ENCODE measurements at regions of chr6 and their contacts with region 1.

Region 1: DNA sequence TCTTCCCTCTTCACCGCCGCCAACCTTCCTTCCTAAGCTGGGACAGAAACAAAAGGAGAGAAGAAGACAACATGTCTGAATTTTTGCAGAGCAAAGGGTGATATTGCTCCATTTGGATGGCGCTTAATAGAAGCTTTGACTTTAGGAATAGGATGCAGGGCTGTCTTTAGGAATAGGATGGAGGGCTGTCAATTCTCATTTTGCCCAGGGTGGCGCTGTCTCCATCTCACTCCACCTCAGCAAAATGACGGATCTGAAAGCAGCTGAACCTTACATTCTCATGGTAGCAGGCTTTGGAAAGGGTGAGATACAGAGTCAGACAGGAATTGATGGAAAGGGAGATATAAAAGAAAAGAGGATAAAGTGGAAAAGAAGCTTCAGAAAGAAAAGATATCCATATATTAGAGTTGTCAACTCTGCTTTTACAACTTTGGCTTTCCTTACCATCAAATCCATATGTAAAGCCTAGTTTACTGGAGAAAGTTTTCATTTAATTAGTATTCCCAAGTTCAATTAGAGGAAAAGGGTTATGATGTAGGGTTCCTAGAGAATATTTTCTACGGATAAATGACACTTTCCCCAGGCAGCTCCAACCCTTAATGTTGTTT is 2.4 kb downstream of the MTCL3 start:
- DNase-seq: no peak
- H3K4me3 ChIP-seq: peak overlapping the region; percentile 71
- CTCF ChIP-seq: peak; percentile 80

Region 2: GRCh38 chr6:127302728-127303660 is 213.8 kb before region 1 on chr6:
- CTCF ChIA-PET with region 1: interaction called, 84 read pairs
- POLR2A ChIA-PET with region 1: no interaction called
- DNase-seq: no peak
- H3K4me3 ChIP-seq: no peak overlapping the region
- CTCF ChIP-seq: peak; percentile 53

Region 3: GRCh38 chr6:127332383-127332961 is 184.3 kb before region 1 on chr6:
- CTCF ChIA-PET with region 1: interaction called, 14 read pairs
- POLR2A ChIA-PET with region 1: no interaction called
- DNase-seq: no peak
- H3K4me3 ChIP-seq: no peak overlapping the region
- CTCF ChIP-seq: no peak

Region 4: DNA sequence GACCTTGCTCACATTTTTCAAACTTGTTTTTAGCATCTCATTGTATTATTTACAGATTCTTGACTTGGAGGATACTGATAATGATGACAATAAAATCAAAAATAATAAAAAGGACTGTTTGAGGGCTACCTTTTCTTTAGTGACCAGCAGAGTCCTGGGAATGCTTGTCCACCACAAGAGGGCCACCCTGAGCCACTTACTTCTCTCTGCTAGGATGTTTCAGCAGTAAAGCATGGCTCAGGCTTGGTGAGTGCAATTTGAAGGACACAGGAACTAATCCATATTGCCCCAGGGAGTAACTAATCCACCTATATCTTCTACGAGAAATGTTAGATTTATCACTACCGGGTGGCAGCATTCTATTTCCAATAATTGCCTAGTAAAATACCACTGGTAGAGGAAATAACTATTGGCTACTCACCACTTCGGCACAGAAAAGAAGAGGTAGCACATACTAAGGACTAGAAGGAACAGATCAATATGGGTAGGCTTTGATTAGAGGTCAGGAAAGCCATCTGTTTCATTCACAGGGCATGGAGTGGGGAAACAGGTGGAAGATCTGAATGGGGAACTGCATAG is 51.8 kb before region 1 on chr6:
- CTCF ChIA-PET with region 1: interaction called, 32 read pairs
- POLR2A ChIA-PET with region 1: no interaction called
- DNase-seq: no peak
- H3K4me3 ChIP-seq: no peak overlapping the region
- CTCF ChIP-seq: peak; percentile 78

Region 5: GRCh38 chr6:127496471-127496870 is 20.3 kb before region 1 on chr6:
- CTCF ChIA-PET with region 1: interaction called, 97 read pairs
- POLR2A ChIA-PET with region 1: no interaction called
- DNase-seq: no peak
- H3K4me3 ChIP-seq: no peak overlapping the region
- CTCF ChIP-seq: no peak

Region 6: GRCh38 chr6:127533011-127533410 is 16.2 kb after region 1 on chr6:
- CTCF ChIA-PET with region 1: interaction called, 58 read pairs
- POLR2A ChIA-PET with region 1: no interaction called
- DNase-seq: no peak
- H3K4me3 ChIP-seq: no peak overlapping the region
- CTCF ChIP-seq: no peak

Region 7: GRCh38 chr6:127547215-127547614 is 30.4 kb after region 1 on chr6:
- CTCF ChIA-PET with region 1: interaction called, 38 read pairs
- POLR2A ChIA-PET with region 1: no interaction called
- DNase-seq: no peak
- H3K4me3 ChIP-seq: no peak overlapping the region
- CTCF ChIP-seq: no peak

Measured in AG04449 (cell line).